CD8-positive, alpha-beta T cell (primary cell): ENCODE measurements at regions of chr1 and their contacts with region 1.

Region 1: DNA sequence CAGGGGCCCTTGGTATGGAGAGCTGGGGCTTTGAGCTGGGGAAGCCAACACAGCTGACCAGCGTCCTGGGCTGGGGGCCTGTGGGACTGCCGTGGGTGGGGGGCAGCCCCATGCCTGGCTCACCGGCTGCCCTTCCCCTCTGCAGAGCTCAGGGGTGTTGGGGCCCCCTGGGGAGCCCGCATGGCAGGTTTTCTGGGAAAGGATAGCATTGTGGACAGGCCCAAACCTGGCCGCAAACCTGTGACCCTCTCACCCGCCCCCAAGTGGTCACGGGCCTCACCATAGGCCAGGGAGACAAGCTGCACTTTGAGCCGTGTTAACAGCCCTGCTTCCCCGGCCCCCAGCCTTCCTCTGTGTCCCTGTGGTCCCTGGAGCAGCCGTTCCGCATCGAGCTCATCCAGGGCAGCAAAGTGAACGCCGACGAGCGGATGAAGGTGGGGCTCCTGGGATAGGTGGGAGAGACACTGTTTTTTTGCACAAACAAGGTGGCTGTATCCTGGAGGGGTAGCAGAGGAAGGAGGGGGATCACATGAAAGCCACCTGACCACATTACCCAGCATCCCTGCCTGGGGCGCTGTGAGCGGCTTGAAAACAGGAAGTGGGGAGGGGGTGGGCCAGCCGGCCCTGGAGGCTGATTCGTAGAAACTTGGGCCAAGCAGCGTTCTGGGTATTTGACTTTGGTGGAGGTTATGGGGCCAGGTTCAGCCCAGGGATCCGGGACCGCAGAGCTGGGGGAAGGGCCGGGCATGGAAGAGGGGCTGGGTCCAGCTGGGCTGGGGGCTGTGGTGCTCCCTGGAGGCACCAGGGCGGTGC is 65.9 kb downstream of the PIK3CD start:
- DNase-seq: peak; percentile 82 to 96 (median 91)
- ATAC-seq: peak; percentile 70
- H3K4me3 ChIP-seq: peak overlapping the region; percentile 74 to 76
- H3K4me3 Mint-ChIP-seq: peak overlapping the region; percentile 91
- H3K27ac ChIP-seq: peak overlapping the region; percentile 81
- H3K27ac Mint-ChIP-seq: peak overlapping the region; percentile 92
- H3K4me1 ChIP-seq: peaks cover 90% of the 10 kb centered on the region
- H3K4me1 Mint-ChIP-seq: peaks cover 75% of the 10 kb centered on the region
- H3K27me3 ChIP-seq: no peaks in the 10 kb centered on the region
- H3K27me3 Mint-ChIP-seq: no peaks in the 10 kb centered on the region
- CTCF ChIP-seq: no peak

Region 2: DNA sequence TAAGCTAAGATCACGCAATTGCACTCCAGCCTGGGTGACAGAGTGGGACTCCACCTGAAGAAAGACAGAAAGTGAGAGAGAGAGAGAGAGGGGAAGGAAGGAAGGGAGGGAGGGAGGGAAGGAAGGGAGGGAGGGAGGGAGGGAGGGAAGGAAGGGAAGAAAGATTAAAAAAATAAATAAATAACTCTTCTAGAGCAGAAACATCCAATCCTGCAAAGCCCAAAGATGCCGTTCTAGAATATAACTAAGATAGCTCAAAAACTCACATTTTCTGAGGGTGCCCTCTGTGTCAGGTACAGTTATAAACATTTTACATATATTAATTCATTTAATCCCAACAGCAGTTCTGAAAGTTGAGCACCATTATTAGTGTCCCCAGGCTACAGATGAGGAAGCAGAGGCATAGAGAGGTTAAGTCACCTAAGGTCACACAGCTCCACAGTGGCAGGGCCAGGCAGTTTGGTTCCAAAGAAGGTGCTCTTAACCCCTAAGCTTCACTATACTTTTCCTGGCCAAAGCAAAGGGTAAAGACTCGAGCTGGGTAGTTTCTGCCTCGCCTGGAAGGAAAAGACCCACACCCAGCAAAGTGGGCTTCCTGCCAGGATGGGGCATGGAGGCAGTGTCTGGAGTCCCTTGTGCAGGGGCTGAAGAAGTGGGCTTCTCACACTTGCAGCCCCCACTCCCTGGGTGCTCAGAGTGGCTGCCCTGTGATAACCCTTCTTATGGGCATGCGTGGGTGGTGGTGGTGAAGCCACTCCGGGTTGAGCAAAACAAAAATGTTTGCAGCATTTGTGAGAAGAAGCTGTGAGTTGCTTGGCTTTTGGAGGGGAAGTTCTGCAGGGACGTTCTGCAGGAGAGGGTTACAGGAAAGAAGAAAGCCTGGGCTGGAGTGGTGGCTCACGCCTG is 73.8 kb before region 1 on chr1:
- CTCF ChIA-PET with region 1: interaction called, 3 read pairs
- POLR2A ChIA-PET with region 1: interaction called, 12 read pairs
- intact Hi-C with region 1: no loop called
- DNase-seq: peak in 5 of 9 experiments; percentile 26 to 60 (median 34)
- ATAC-seq: peak; percentile 24
- H3K4me3 ChIP-seq: no peak overlapping the region
- H3K4me3 Mint-ChIP-seq: peak overlapping the region; percentile 66
- H3K27ac ChIP-seq: peak overlapping the region in 1 of 2 experiments; percentile 28
- H3K27ac Mint-ChIP-seq: peak overlapping the region; percentile 88
- H3K4me1 ChIP-seq: peaks cover 75% of the 10 kb centered on the region
- H3K4me1 Mint-ChIP-seq: peaks cover 72% of the 10 kb centered on the region
- H3K27me3 ChIP-seq: no peaks in the 10 kb centered on the region
- H3K27me3 Mint-ChIP-seq: no peaks in the 10 kb centered on the region
- CTCF ChIP-seq: no peak

Region 3: DNA sequence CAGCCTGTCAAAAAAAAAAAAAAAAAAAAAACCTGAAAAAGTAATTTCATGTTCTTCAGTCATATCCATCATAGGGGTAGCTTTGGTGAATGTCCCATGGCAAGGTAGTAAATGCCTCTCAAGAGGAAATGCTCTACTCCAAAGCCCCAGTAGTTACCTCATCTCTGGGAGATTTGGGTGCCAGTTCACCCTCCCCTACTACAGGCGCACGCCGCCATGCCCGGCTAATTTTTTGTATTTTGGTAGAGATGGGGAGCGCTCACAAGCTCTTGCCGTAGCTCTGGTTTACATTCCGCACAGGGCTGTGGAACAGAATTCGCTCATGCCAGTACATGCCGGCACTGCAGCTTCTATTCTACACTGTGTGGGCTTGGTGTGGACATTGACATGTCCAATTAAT is 52.2 kb before region 1 on chr1:
- CTCF ChIA-PET with region 1: interaction called, 3 read pairs
- POLR2A ChIA-PET with region 1: interaction called, 13 read pairs
- intact Hi-C with region 1: no loop called
- DNase-seq: peak in 2 of 9 experiments; percentile 33 to 35
- ATAC-seq: peak; percentile 53
- H3K4me3 ChIP-seq: no peak overlapping the region
- H3K4me3 Mint-ChIP-seq: peak overlapping the region; percentile 41
- H3K27ac ChIP-seq: no peak overlapping the region
- H3K27ac Mint-ChIP-seq: peak overlapping the region; percentile 78
- H3K4me1 ChIP-seq: peaks cover 55% of the 10 kb centered on the region
- H3K4me1 Mint-ChIP-seq: peaks cover 57% of the 10 kb centered on the region
- H3K27me3 ChIP-seq: no peaks in the 10 kb centered on the region
- H3K27me3 Mint-ChIP-seq: no peaks in the 10 kb centered on the region
- CTCF ChIP-seq: no peak

Region 4: DNA sequence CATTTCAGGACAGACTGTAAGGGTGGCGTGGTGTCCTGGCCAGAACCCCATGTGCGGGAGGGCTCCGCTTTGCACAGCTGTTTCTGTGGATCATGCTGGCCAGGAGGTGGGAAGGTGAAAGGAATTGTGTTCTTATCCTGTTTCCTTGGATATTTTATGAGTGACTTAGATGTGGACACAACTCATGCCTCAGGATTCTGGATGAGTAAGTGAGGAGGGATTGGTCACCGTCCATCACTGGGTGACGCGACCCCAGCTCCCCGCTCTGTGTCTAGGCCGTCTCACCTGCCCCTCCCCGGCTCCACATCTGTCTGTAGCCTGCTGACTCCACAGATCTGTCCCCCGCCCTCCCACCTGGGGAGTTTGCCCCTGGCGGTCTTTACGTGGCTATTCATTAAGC is 17.1 kb before region 1 on chr1:
- CTCF ChIA-PET with region 1: interaction called, 26 read pairs
- POLR2A ChIA-PET with region 1: interaction called, 116 read pairs
- intact Hi-C with region 1: no loop called
- DNase-seq: no peak
- ATAC-seq: no peak
- H3K4me3 ChIP-seq: no peak overlapping the region
- H3K4me3 Mint-ChIP-seq: no peak overlapping the region
- H3K27ac ChIP-seq: no peak overlapping the region
- H3K27ac Mint-ChIP-seq: peak overlapping the region; percentile 86
- H3K4me1 ChIP-seq: peaks cover 49% of the 10 kb centered on the region
- H3K4me1 Mint-ChIP-seq: peaks cover 68% of the 10 kb centered on the region
- H3K27me3 ChIP-seq: no peaks in the 10 kb centered on the region
- H3K27me3 Mint-ChIP-seq: no peaks in the 10 kb centered on the region
- CTCF ChIP-seq: no peak

Region 5: DNA sequence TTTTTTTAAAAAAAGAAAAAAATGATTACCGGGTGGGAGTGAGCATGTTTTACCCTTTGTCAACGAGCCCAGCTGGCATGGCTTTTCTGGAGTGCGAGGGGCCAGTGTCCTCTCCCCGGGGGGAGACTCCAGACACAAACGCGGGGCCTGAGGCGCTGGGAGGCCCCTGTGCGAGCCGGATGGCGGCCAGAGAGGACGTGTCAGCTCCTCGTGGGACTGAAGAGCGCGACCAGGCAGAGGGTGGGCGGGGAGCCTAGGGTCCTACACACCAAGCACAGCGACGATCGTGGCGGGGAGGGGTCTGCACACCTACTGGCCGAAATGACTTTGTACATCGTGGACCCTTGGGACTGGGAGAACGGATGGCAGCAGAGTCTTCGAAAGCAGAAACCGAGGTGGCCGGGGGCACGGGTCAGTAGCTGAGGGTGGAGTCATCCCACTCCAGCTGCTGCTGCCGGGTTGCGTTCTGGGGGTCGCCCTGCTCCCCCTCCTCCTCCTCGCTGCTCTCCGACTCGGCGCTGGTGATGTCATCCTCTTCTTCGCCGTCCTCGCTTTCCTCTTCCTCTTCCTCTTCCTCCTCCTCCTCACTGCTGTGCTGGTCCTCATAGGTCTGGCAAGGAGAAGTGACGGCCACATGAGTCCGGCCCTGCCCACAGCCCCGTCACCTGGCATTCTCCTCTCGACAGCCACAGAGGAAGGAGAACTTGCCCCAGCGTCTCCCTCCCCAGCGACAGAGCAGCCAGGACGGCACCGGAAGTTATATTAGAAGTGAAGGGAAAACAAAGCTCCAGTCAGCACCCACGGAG is 12.9 kb after region 1 on chr1:
- CTCF ChIA-PET with region 1: interaction called, 37 read pairs
- POLR2A ChIA-PET with region 1: interaction called, 71 read pairs
- intact Hi-C with region 1: loop called in 1 of 2 experiments (anchors 1 kb)
- DNase-seq: peak in 1 of 9 experiments; percentile 44
- ATAC-seq: no peak
- H3K4me3 ChIP-seq: no peak overlapping the region
- H3K4me3 Mint-ChIP-seq: peak overlapping the region; percentile 44
- H3K27ac ChIP-seq: peak overlapping the region in 1 of 2 experiments; percentile 39
- H3K27ac Mint-ChIP-seq: peak overlapping the region; percentile 89
- H3K4me1 ChIP-seq: peaks cover 64% of the 10 kb centered on the region
- H3K4me1 Mint-ChIP-seq: peaks cover 68% of the 10 kb centered on the region
- H3K27me3 ChIP-seq: no peaks in the 10 kb centered on the region
- H3K27me3 Mint-ChIP-seq: no peaks in the 10 kb centered on the region
- CTCF ChIP-seq: no peak